Sigmoid colon (tissue), 7 donors: ENCODE measurements at regions of chr14 and their contacts with region 1.

Region 1: GRCh38 chr14:22929104-22929847 is at the start of gene PRMT5:
- DNase-seq: peak; percentile 100
- H3K4me3 ChIP-seq: peak within 1 kb of the TSS; percentile 75 to 91 (median 83)
- H3K27ac ChIP-seq: peak within 1 kb of the TSS; percentile 87 to 97 (median 94)
- H3K4me1 ChIP-seq: peaks cover 0 to 21% (median 16%) of the 10 kb centered on the region in 4 donors
- H3K27me3 ChIP-seq: no peaks in the 10 kb centered on the region
- CTCF ChIP-seq: no peak
- EP300 ChIP-seq: no peak
- POLR2A ChIP-seq: peak; percentile 74 to 84
- total RNA-seq, gene PRMT5: 33.3 to 61.7 (median 44.7) TPM

Region 2: GRCh38 chr14:22598099-22598899 is 331.0 kb before region 1 on chr14 and contains the start of gene ABHD4:
- intact Hi-C with region 1: no loop called
- DNase-seq: peak; percentile 91
- H3K4me3 ChIP-seq: peak within 1 kb of the TSS; percentile 69 to 81 (median 71)
- H3K27ac ChIP-seq: peak within 1 kb of the TSS; percentile 84 to 93 (median 90)
- H3K4me1 ChIP-seq: peaks cover 0 to 27% (median 22%) of the 10 kb centered on the region in 4 donors
- H3K27me3 ChIP-seq: no peaks in the 10 kb centered on the region
- CTCF ChIP-seq: no peak
- EP300 ChIP-seq: no peak
- POLR2A ChIP-seq: peak; percentile 39 to 76
- total RNA-seq, gene ABHD4: 17.4 to 20.4 (median 18.7) TPM

Region 3: DNA sequence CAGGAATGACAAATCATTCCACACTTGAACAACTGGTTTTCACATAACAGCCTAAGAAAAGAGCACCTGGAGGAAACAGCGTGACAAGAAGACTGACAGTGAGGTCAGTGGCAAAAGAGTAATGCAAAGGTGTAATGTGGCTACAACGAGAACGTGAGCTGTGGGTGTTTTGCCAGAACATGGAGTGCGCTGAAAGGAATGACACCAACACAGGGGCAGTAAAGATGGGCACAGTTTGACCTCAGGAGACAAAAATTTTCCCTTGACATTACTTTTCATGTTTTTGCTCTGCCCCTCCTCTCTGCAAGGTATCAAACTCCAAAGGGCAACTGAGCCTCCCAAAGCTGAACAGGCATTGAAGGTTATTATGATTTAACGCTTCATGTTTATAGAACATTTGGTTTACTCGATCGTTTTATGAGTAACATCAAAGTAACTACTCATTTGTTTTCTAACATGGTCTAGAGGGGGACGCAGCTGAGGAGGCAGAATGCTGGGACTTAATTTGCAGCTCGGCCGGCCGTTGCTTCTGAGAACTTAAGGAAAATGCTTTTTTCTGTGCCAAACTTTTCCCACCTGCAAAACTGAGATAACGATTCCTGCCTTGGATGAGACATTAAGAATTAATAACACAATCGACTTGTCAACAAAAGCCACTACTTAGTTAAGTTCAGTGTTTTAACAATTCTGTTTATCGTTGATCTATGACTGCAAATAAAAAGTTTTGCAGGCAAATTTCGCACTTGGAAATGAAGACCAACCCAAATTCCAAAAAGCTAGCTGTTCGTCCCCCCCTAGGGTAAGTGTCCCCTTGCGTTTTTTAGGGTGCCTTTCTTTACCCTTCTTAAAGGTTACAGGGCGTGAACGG is 26.7 kb after region 1 on chr14:
- intact Hi-C with region 1: loop called (anchors 2 kb)
- DNase-seq: peak; percentile 58
- H3K4me3 ChIP-seq: peak overlapping the region; percentile 51 to 72 (median 60)
- H3K27ac ChIP-seq: peak overlapping the region; percentile 90 to 94 (median 94)
- H3K4me1 ChIP-seq: peaks cover 0 to 17% (median 6%) of the 10 kb centered on the region in 4 donors
- H3K27me3 ChIP-seq: no peaks in the 10 kb centered on the region
- CTCF ChIP-seq: no peak
- EP300 ChIP-seq: no peak
- POLR2A ChIP-seq: no peak

Region 4: DNA sequence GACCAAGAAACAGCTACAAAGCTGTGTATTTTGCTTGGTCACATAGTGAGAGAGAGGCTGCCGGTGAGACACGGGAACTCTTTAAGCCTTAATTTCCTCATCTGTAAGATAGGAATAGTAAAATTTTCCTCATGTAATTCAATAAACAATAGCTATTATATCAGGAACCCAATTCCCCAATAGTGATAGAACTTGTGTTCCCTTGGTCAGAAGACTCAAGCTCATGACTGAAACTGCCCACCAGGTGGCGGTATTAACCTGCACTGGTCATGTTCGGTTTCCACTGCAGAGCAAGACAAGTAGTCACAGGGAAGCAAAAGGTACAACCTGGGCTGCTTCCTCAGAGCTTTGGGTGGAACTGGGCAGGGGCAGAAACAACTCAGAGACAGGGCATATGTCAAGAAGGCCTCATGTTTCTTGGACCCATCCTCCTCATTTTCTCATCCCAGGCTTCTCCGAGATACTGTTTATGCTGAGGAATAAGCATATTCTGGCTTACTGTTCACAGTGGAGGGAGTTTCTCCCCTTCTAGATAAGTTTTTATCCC is 57.3 kb after region 1 on chr14:
- intact Hi-C with region 1: loop called (anchors 2 kb)
- DNase-seq: peak; percentile 94
- H3K4me3 ChIP-seq: no peak overlapping the region
- H3K27ac ChIP-seq: no peak overlapping the region
- H3K4me1 ChIP-seq: peaks cover 0 to 17% (median 5%) of the 10 kb centered on the region in 4 donors
- H3K27me3 ChIP-seq: peaks cover 0 to 1% (median 0%) of the 10 kb centered on the region in 3 donors
- CTCF ChIP-seq: peak; percentile 67 to 91 (median 90)
- EP300 ChIP-seq: no peak
- POLR2A ChIP-seq: no peak